Natural killer cell (primary cell): ENCODE measurements at regions of chr19 and their contacts with region 1.

Region 1: GRCh38 chr19:7868676-7869452 is 5.3 kb downstream of the PRR36 start:
- DNase-seq: peak; percentile 86 to 95
- ATAC-seq: peak; percentile 74 to 90 (median 80)
- H3K4me3 ChIP-seq: peak overlapping the region; percentile 35
- H3K4me3 Mint-ChIP-seq: peak overlapping the region; percentile 83
- H3K27ac ChIP-seq: peak overlapping the region; percentile 57
- H3K27ac Mint-ChIP-seq: peak overlapping the region; percentile 86 to 89
- H3K4me1 ChIP-seq: peaks cover 47% of the 10 kb centered on the region
- H3K4me1 Mint-ChIP-seq: peaks cover 12 to 31% of the 10 kb centered on the region in 2 donors
- H3K27me3 ChIP-seq: peaks cover 24% of the 10 kb centered on the region
- H3K27me3 Mint-ChIP-seq: peaks cover 9 to 37% of the 10 kb centered on the region in 2 donors
- CTCF ChIP-seq: peak; percentile 96

Region 2: GRCh38 chr19:7829561-7830271 is 39.1 kb before region 1 on chr19 and contains the start of gene EVI5L:
- intact Hi-C with region 1: loop called (anchors 2 kb)
- DNase-seq: peak; percentile 99
- ATAC-seq: peak; percentile 81 to 92 (median 82)
- H3K4me3 ChIP-seq: peak within 1 kb of the TSS; percentile 38
- H3K4me3 Mint-ChIP-seq: peak within 1 kb of the TSS; percentile 84
- H3K27ac ChIP-seq: peak within 1 kb of the TSS; percentile 35
- H3K27ac Mint-ChIP-seq: peak within 1 kb of the TSS; percentile 80 to 90
- H3K4me1 ChIP-seq: peaks cover 23% of the 10 kb centered on the region
- H3K4me1 Mint-ChIP-seq: peaks cover 15 to 36% of the 10 kb centered on the region in 2 donors
- H3K27me3 ChIP-seq: no peaks in the 10 kb centered on the region
- H3K27me3 Mint-ChIP-seq: no peaks in the 10 kb centered on the region
- CTCF ChIP-seq: no peak
- total RNA-seq, gene EVI5L: 9.6 to 13.5 (median 11.3) TPM

Region 3: DNA sequence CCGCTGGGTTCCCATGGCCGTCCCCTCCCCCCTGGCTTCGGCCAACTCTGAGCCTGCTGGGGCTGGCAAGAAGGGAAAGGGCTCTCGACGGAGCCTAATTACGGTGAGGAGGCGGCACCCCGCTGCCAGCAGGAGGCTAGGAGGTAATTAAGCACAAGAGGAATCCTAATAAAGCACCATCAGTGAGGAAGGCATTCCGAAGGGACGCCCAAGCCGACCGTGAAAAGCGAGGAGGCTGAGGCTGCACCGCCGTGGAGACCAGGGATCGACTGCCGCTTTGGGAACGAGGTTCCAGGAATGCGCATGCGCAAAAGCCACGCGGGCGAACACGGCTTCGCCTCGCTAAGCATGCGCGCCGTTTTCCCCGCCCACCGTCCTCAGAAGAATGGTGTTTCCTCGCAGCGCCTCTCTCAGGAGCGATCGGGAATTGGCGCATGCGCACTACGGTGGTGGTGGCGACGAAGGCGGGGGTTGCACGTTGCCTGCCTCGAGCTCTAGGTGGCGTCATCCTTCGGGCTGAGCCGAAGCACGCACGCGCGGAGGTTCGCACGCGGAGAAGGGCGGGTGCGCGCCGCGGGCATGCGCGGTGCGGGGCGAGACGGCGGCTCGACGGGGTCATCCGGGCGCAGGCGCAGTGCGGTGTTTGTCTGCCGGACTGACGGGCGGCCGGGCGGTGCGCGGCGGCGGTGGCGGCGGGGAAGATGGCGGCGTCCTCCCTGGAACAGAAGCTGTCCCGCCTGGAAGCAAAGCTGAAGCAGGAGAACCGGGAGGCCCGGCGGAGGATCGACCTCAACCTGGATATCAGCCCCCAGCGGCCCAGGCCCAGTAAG is 34.6 kb after region 1 on chr19 and contains the start of gene MAP2K7:
- intact Hi-C with region 1: loop called (anchors 2 kb)
- DNase-seq: peak; percentile 100
- ATAC-seq: peak; percentile 71 to 87 (median 72)
- H3K4me3 ChIP-seq: peak within 1 kb of the TSS; percentile 62
- H3K4me3 Mint-ChIP-seq: peak within 1 kb of the TSS; percentile 93
- H3K27ac ChIP-seq: peak within 1 kb of the TSS; percentile 88
- H3K27ac Mint-ChIP-seq: peak within 1 kb of the TSS; percentile 95 to 99
- H3K4me1 ChIP-seq: peaks cover 32% of the 10 kb centered on the region
- H3K4me1 Mint-ChIP-seq: peaks cover 20 to 47% of the 10 kb centered on the region in 2 donors
- H3K27me3 ChIP-seq: no peaks in the 10 kb centered on the region
- H3K27me3 Mint-ChIP-seq: peaks cover 0 to 3% of the 10 kb centered on the region in 2 donors
- CTCF ChIP-seq: peak; percentile 57
- total RNA-seq, gene MAP2K7: 131 to 218 (median 159) TPM

Region 4: DNA sequence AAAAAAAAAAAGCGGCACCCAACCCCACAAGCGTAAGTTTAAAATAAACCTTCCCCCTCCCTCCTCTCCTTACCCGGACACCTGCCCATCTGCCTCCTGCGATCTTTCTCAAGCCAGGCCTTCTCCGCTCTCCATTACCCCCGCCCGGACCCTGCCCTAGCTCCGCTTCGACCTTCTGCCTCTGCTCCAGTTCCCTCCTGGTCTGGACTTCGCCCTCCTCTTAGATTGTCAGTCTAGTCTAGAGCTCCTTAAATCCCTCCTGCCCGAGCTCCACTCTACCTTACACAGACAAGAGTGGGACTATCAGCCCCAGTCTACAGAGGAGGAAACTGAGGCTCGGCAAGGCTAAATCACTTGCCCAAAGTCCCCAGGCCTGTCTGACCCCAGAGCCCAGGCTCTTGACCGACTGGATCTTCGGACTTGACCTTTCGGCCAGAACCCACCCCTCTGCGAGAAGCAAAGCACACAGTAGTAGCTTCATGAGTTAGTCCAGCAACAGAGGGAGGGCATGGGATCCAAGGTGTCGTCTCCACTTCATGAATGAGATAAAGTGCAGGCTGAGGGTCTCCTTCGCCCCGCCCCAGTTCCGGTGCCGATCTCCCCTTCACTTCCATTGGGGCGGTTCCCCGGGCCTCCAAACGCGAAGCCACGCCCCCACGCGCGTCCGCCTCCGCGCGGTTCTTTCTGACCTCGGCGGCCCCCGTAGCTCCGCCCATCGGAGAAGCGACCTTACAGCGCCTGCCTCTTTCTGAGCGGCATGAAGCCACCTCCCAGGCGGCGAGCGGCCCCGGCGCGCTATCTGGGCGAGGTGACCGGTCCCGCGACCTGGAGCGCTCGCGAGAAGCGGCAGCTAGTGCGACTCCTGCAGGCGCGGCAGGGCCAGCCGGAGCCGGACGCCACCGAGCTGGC is 51.0 kb after region 1 on chr19 and contains the start of gene SNAPC2:
- intact Hi-C with region 1: loop called (anchors 1 kb)
- DNase-seq: peak; percentile 97 to 98
- ATAC-seq: peak; percentile 60 to 79 (median 62)
- H3K4me3 ChIP-seq: peak within 1 kb of the TSS; percentile 55
- H3K4me3 Mint-ChIP-seq: peak within 1 kb of the TSS; percentile 90
- H3K27ac ChIP-seq: peak within 1 kb of the TSS; percentile 72
- H3K27ac Mint-ChIP-seq: peak within 1 kb of the TSS; percentile 82 to 96
- H3K4me1 ChIP-seq: peaks cover 59% of the 10 kb centered on the region
- H3K4me1 Mint-ChIP-seq: peaks cover 21 to 37% of the 10 kb centered on the region in 2 donors
- H3K27me3 ChIP-seq: peaks cover 26% of the 10 kb centered on the region
- H3K27me3 Mint-ChIP-seq: peaks cover 0 to 22% of the 10 kb centered on the region in 2 donors
- CTCF ChIP-seq: no peak
- total RNA-seq, gene SNAPC2: 22.1 to 32.4 (median 27.1) TPM